CD4-positive, alpha-beta T cell (primary cell): ENCODE measurements at regions of chr16 and their contacts with region 1.

Region 1: DNA sequence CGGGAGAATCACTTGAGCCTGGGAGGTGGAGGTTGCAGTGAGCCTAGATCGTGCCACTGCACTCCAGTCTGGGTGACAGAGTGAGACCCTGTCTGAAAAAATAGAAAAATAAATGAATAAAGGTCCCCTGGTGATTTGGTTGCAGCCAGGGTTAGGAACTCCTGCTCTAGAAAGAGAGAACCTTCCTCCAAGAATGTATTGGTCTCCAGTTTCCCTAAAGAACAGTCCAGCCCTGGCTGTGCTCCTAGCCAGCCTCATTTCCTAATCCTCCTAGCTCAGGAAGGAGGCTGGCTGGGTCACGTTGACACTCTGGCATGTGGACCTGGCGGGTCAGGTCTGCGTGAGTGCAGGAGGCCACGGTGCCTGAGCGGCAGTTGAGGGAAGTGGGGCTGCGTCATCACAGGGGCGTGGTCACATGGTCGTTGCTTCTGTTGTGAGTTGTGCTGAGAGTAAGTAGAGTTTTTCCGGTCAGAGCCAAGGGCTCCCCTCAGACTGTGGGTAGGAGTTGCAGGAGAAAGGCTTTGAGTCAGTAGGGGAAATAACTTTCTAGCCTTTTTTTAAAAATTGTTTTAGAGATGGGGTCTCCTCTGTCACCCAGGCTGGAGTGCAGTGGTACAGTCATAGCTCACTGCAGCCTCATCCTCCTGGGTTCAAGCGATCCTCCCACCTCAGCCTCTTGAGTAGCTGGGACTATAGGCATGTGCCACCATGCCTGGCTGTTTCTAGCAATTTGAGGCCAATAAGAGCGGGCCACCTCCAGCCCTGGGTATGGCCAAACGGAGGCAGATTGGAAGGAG is 193.9 kb upstream of the CIBAR2 start:
- DNase-seq: peak; percentile 62 to 91 (median 78)
- ATAC-seq: peak; percentile 88
- H3K4me3 ChIP-seq: no peak overlapping the region
- H3K4me3 Mint-ChIP-seq: peak overlapping the region; percentile 35
- H3K27ac ChIP-seq: peak overlapping the region in 1 of 2 donors; percentile 41
- H3K27ac Mint-ChIP-seq: peak overlapping the region; percentile 86
- H3K4me1 ChIP-seq: peaks cover 80% of the 10 kb centered on the region
- H3K4me1 Mint-ChIP-seq: peaks cover 61% of the 10 kb centered on the region
- H3K27me3 ChIP-seq: peaks cover 0 to 5% of the 10 kb centered on the region in 2 experiments
- H3K27me3 Mint-ChIP-seq: no peaks in the 10 kb centered on the region
- CTCF ChIP-seq: no peak

Region 2: DNA sequence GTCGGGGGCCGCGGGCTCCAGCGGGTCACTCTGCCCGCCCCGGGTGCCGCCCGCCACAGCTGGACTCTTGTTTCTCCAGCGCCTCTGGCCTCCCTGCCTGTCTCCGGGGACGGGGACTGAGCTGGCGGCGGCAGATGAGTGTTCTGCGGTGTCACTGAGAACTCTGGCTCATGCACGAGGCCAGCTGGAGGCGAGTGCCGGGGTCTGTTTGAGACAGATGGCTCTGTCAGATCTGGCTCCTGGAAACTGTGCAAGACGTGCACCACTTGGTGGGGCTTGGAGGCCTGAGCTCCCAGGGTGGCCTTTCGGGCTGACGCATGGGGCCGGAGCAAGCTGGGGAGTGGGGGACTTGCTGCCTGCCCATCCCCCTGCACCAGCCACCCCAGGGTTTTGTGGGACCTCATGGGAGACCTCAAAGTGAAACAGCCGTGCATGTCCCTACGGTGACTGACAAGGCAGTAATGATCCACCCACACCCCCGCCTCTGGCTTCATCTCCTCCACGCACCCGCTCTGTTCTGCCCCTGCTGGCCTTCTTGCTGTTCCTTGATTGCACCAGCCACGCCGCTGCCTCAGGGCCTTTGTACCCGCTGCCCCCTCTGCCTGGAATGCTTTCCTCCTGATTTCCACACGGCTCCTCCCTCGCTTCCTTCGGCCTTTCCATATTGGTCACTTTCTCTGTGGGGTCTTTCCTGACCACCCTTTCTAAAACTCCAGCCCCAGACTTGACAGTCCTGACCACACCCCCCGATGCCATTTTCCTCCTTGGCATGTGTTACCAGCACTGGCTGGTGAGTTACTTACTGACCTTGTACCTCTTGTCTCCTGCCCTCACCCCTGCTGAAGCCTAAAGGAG is 19.0 kb before region 1 on chr16:
- CTCF ChIA-PET with region 1: no interaction called
- POLR2A ChIA-PET with region 1: no interaction called
- intact Hi-C with region 1: no loop called
- DNase-seq: no peak
- ATAC-seq: no peak
- H3K4me3 ChIP-seq: no peak overlapping the region
- H3K4me3 Mint-ChIP-seq: no peak overlapping the region
- H3K27ac ChIP-seq: no peak overlapping the region
- H3K27ac Mint-ChIP-seq: no peak overlapping the region
- H3K4me1 ChIP-seq: no peaks in the 10 kb centered on the region
- H3K4me1 Mint-ChIP-seq: no peaks in the 10 kb centered on the region
- H3K27me3 ChIP-seq: no peaks in the 10 kb centered on the region
- H3K27me3 Mint-ChIP-seq: no peaks in the 10 kb centered on the region
- CTCF ChIP-seq: no peak

Region 3: DNA sequence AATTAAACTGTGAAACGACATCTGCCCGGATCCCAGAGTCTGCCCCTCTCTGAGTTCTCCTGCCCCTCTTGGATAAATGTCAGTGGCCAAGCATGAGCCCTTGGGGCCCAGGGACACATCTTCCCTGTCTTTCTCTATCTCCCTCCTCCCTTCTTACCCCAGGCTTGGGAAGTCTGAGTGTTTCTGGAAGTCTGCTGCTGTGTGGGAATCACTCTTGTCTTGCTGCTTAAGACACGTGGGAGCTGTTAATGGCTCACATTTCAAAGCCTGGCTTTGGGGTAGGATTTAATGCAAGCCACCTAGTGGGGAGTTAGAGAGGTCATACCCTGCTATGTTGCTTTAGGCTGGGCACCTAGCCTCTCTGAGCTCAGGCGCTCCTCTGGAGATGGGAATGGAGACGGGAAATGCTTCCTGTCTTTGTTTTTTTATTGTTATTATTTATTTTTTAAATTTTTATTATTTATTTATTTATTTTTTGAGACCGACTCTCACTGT is 24.5 kb after region 1 on chr16:
- CTCF ChIA-PET with region 1: interaction called, 3 read pairs
- POLR2A ChIA-PET with region 1: interaction called, 19 read pairs
- intact Hi-C with region 1: loop called (anchors 1 kb)
- DNase-seq: peak in 5 of 14 experiments; percentile 16 to 66 (median 40)
- ATAC-seq: peak; percentile 58
- H3K4me3 ChIP-seq: no peak overlapping the region
- H3K4me3 Mint-ChIP-seq: no peak overlapping the region
- H3K27ac ChIP-seq: no peak overlapping the region
- H3K27ac Mint-ChIP-seq: no peak overlapping the region
- H3K4me1 ChIP-seq: peaks cover 22% of the 10 kb centered on the region
- H3K4me1 Mint-ChIP-seq: peaks cover 23% of the 10 kb centered on the region
- H3K27me3 ChIP-seq: peaks cover 17 to 19% of the 10 kb centered on the region in 2 experiments
- H3K27me3 Mint-ChIP-seq: peaks cover 9% of the 10 kb centered on the region
- CTCF ChIP-seq: peak; percentile 40

Region 4: DNA sequence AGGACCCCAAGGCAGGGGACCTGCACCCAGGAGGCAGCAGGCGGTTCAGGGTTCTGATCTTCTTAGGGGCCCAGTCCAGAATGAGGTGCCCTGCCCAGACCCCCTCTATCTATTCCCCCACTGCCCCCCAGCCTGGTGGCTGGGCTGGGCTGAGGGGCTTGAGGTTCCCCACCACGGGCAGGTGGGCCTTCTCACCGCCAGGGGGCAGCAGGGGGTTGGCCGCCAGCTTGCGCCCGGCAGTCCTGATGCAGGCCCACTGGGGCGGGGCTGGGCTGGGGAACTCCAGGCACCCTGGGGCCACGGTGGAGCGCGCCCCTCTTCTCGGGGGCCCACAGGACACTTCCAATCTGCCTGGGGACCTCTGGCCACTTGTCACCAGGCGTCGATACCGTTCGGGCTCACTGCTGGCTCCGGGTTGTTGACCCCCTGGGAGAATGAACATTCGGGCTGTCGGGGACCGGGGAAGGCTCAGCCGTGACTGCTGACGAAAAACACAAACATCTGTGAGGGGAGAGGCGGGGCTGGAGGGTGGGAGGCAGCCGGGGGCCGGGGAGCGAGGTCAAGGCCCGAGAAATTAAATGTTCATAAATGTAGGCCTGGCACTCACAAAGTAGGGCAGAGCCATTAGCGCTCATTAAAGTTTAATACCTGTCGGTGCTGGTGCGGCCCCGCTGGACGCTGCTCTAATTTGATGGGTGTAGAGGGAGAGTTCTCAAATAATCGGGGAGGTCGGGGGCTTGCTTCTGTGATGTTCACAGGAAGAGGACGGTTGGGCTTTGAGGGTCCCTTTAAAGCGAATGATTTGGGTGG is 87.7 kb after region 1 on chr16:
- CTCF ChIA-PET with region 1: no interaction called
- POLR2A ChIA-PET with region 1: no interaction called
- intact Hi-C with region 1: loop called in 1 of 2 experiments (anchors 2 kb)
- DNase-seq: peak; percentile 40 to 78 (median 55)
- ATAC-seq: peak; percentile 52
- H3K4me3 ChIP-seq: no peak overlapping the region
- H3K4me3 Mint-ChIP-seq: no peak overlapping the region
- H3K27ac ChIP-seq: no peak overlapping the region
- H3K27ac Mint-ChIP-seq: no peak overlapping the region
- H3K4me1 ChIP-seq: no peaks in the 10 kb centered on the region
- H3K4me1 Mint-ChIP-seq: no peaks in the 10 kb centered on the region
- H3K27me3 ChIP-seq: no peaks in the 10 kb centered on the region
- H3K27me3 Mint-ChIP-seq: no peaks in the 10 kb centered on the region
- CTCF ChIP-seq: peak; percentile 78

Region 5: GRCh38 chr16:85503679-85504231 is 197.6 kb after region 1 on chr16:
- CTCF ChIA-PET with region 1: no interaction called
- POLR2A ChIA-PET with region 1: no interaction called
- intact Hi-C with region 1: no loop called
- DNase-seq: no peak
- ATAC-seq: no peak
- H3K4me3 ChIP-seq: no peak overlapping the region
- H3K4me3 Mint-ChIP-seq: no peak overlapping the region
- H3K27ac ChIP-seq: no peak overlapping the region
- H3K27ac Mint-ChIP-seq: no peak overlapping the region
- H3K4me1 ChIP-seq: no peaks in the 10 kb centered on the region
- H3K4me1 Mint-ChIP-seq: no peaks in the 10 kb centered on the region
- H3K27me3 ChIP-seq: no peaks in the 10 kb centered on the region
- H3K27me3 Mint-ChIP-seq: no peaks in the 10 kb centered on the region
- CTCF ChIP-seq: no peak

Region 6: DNA sequence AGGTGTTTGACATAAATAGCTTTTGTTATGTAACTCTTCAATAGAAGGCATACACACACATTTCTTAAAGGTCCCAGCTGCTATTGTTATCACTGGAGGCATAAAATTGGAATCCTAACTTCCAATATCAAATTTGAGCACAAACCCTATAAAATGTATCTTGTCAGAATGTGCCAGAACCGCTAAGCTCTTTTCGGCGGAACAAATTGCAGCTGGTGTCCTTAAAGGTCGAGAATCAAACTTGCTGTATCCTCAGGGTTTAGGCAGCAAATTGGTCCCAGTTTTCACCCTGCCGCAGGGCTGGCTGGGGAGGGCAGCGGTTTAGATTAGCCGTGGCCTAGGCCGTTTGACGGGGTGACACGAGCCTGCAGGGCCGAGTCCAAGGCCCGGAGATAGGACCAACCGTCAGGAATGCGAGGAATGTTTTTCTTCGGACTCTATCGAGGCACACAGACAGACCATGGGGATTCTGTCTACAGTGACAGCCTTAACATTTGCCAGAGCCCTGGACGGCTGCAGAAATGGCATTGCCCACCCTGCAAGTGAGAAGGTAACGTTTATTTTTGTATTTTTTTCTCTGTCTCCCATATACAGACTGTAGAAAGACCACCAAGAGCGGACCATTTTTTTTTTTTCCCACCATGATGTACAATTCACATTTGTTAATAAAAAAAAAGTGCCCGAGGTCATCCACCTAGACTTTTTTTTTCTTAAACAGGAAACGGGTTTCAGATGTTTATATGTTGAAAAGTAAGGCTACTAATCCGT is 889.9 kb after region 1 on chr16:
- CTCF ChIA-PET with region 1: no interaction called
- POLR2A ChIA-PET with region 1: no interaction called
- intact Hi-C with region 1: no loop called
- DNase-seq: no peak
- ATAC-seq: no peak
- H3K4me3 ChIP-seq: no peak overlapping the region
- H3K4me3 Mint-ChIP-seq: no peak overlapping the region
- H3K27ac ChIP-seq: no peak overlapping the region
- H3K27ac Mint-ChIP-seq: no peak overlapping the region
- H3K4me1 ChIP-seq: no peaks in the 10 kb centered on the region
- H3K4me1 Mint-ChIP-seq: no peaks in the 10 kb centered on the region
- H3K27me3 ChIP-seq: peaks cover 25 to 68% of the 10 kb centered on the region in 2 experiments
- H3K27me3 Mint-ChIP-seq: peaks cover 92% of the 10 kb centered on the region
- CTCF ChIP-seq: no peak